Mammary epithelial cell (primary cell): ENCODE measurements at regions of chr3 and their contacts with region 1.

Region 1: DNA sequence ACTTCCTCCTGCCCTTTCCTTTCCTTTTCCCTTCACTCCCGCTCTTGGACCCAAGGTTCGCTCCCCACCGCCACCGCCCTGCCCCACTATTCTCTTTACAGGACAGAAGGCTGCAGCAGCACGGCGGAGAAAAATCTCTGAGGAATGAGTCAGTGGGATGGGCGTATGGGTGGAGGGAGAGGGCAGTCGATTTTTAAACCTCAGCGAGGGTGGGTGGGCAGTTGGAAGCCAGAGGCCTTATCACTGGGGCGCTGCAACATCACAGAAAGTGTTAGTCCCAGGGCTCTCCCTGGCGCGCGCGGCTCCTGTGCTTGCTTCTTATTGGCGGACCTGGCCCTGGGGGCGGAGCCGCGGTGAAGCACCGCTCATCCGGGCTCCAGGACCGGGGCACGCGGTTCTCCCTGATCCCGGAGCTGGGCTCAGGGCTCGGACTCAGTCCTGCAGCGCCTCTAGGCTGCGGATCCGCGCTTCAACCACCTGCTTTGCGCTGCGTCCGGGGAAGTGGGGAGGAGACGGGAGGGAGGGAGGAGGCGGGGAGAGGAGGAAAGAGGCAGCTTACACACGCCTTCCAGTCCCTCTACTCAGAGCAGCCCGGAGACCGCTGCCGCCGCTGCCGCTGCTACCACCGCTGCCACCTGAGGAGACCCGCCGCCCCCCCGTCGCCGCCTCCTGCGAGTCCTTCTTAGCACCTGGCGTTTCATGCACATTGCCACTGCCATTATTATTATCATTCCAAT is at the start of gene ALCAM:
- DNase-seq: peak; percentile 99
- H3K4me3 ChIP-seq: peak within 1 kb of the TSS; percentile 75 to 91 (median 82)
- H3K27ac ChIP-seq: peak within 1 kb of the TSS; percentile 98
- H3K4me1 ChIP-seq: peaks cover 39% of the 10 kb centered on the region
- H3K27me3 ChIP-seq: no peaks in the 10 kb centered on the region
- CTCF ChIP-seq: peak; percentile 55 to 82
- total RNA-seq, gene ALCAM: 67.6 to 88.4 TPM

Region 2: GRCh38 chr3:104102386-104102785 is 1264.1 kb before region 1 on chr3:
- CTCF ChIA-PET with region 1: interaction called, 3 read pairs
- dilution Hi-C with region 1: no loop called
- in situ Hi-C with region 1: no loop called
- intact Hi-C with region 1: loop called (anchors 2 kb)
- DNase-seq: peak; percentile 13
- H3K4me3 ChIP-seq: no peak overlapping the region
- H3K27ac ChIP-seq: no peak overlapping the region
- H3K4me1 ChIP-seq: no peaks in the 10 kb centered on the region
- H3K27me3 ChIP-seq: no peaks in the 10 kb centered on the region
- CTCF ChIP-seq: peak; percentile 51 to 72

Region 3: DNA sequence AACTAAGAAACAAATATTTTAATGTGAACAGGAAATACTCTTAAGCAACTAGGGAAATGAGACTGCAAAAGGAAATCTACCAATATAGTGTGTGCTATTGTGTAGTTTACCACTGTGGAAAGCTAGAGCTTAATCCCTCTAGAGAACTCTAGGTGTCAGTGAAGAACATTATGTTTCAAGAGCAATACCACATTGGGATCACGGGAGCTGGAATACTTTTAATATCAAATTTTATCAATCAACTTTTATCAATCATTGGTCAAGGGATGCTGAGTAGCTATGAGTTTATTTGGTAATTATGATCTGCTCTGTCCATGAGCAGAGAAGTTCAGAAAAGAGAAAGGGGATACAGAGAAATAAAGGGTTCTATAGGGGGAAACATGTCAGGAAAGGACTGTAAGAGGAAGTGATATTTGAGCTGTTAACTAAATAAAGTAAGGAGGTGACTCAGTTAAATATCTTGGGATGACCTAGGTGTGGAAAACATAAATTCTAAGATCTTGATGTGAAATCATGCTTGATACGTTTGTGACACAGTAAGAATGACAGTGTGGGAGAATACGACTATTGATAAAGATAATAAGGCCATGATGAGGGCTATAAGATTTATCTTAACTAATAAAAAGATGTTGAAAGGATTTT is 762.0 kb before region 1 on chr3:
- CTCF ChIA-PET with region 1: interaction called, 10 read pairs
- dilution Hi-C with region 1: no loop called
- in situ Hi-C with region 1: loop called in 1 of 2 experiments (anchors 10 kb)
- intact Hi-C with region 1: loop called (anchors 2 kb)
- DNase-seq: peak; percentile 11
- H3K4me3 ChIP-seq: no peak overlapping the region
- H3K27ac ChIP-seq: no peak overlapping the region
- H3K4me1 ChIP-seq: no peaks in the 10 kb centered on the region
- H3K27me3 ChIP-seq: no peaks in the 10 kb centered on the region
- CTCF ChIP-seq: peak; percentile 47 to 52

Region 4: DNA sequence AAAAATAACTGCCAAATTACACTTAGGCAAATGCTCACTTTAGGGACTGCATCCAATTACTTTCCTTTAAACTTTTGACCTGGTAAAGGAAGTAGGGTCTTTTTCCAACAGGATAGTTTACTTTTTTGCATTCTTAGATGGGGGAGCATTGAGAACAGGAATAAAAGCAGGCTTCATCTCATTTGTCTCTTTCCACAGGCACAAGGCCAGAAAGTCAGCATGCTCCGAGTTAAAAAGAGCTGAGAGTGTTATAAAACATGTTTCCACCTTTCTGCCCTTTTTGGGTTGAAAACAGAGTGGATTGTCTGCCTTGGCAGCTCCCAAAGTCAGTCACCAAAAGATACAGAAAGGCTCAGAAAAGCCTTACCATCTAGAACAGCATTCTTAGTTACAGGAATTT is 404.6 kb before region 1 on chr3:
- CTCF ChIA-PET with region 1: interaction called, 18 read pairs
- dilution Hi-C with region 1: no loop called
- in situ Hi-C with region 1: no loop called
- intact Hi-C with region 1: no loop called
- DNase-seq: no peak
- H3K4me3 ChIP-seq: no peak overlapping the region
- H3K27ac ChIP-seq: no peak overlapping the region
- H3K4me1 ChIP-seq: no peaks in the 10 kb centered on the region
- H3K27me3 ChIP-seq: no peaks in the 10 kb centered on the region
- CTCF ChIP-seq: no peak

Region 5: GRCh38 chr3:105195260-105195659 is 171.2 kb before region 1 on chr3:
- CTCF ChIA-PET with region 1: no interaction called
- dilution Hi-C with region 1: no loop called
- in situ Hi-C with region 1: no loop called
- intact Hi-C with region 1: loop called (anchors 5 kb)
- DNase-seq: peak; percentile 14
- H3K4me3 ChIP-seq: no peak overlapping the region
- H3K27ac ChIP-seq: no peak overlapping the region
- H3K4me1 ChIP-seq: no peaks in the 10 kb centered on the region
- H3K27me3 ChIP-seq: no peaks in the 10 kb centered on the region
- CTCF ChIP-seq: no peak

Region 6: DNA sequence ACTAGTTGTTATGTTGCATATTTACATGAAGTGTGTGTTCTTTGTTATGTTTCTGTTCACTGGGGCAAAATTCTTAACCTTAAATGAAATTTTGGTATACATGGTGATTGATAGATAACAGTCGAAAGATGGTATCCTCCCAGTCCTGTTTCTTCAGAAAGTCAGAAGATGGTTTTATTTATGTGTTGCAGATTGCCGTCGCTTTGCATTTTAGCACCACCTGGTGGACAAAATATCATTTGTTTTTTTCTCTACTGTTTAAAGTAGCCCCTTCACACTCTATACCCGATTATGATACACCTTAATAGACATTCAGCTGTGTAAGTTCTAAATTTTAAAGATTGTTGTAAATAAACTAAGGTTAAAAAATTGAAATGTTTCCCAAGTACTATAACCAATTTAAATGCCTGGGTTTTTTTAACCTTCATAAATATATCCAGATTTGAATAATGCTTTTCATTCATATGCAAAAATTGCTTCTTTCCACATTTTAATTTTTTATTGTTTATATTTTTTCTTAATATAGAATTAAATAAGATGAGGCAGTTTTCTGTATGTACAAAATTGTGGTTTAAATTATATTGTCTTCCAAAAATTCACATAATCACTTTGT is 152.4 kb after region 1 on chr3:
- CTCF ChIA-PET with region 1: interaction called, 3 read pairs
- dilution Hi-C with region 1: no loop called
- in situ Hi-C with region 1: loop called (anchors 10 kb)
- intact Hi-C with region 1: loop called (anchors 1 kb)
- DNase-seq: peak; percentile 53
- H3K4me3 ChIP-seq: no peak overlapping the region
- H3K27ac ChIP-seq: no peak overlapping the region
- H3K4me1 ChIP-seq: peaks cover 3% of the 10 kb centered on the region
- H3K27me3 ChIP-seq: no peaks in the 10 kb centered on the region
- CTCF ChIP-seq: peak; percentile 35 to 63

Region 7: DNA sequence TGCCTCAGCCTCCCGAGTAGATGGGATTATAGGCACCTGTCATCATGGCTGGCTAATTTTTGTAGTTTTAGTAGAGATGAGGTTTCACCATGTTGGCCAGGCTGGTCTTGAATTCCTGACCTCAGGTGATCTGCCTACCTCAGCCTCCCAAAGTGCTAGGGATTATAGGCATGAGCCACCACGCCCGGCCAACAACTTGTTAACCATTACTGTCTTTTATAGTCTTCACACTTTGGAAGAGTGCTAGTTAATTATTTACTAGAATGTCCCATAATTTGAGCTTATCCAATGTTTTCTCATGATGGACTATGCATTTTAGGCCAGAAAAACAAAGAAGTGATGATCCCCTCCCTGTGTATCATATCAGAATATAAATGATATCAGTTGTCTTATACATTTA is 790.9 kb after region 1 on chr3:
- CTCF ChIA-PET with region 1: no interaction called
- dilution Hi-C with region 1: no loop called
- in situ Hi-C with region 1: no loop called
- intact Hi-C with region 1: no loop called
- DNase-seq: no peak
- H3K4me3 ChIP-seq: no peak overlapping the region
- H3K27ac ChIP-seq: no peak overlapping the region
- H3K4me1 ChIP-seq: no peaks in the 10 kb centered on the region
- H3K27me3 ChIP-seq: no peaks in the 10 kb centered on the region
- CTCF ChIP-seq: no peak